H1 (cell line): ENCODE measurements at regions of chr1 and their contacts with region 1.

Region 1: DNA sequence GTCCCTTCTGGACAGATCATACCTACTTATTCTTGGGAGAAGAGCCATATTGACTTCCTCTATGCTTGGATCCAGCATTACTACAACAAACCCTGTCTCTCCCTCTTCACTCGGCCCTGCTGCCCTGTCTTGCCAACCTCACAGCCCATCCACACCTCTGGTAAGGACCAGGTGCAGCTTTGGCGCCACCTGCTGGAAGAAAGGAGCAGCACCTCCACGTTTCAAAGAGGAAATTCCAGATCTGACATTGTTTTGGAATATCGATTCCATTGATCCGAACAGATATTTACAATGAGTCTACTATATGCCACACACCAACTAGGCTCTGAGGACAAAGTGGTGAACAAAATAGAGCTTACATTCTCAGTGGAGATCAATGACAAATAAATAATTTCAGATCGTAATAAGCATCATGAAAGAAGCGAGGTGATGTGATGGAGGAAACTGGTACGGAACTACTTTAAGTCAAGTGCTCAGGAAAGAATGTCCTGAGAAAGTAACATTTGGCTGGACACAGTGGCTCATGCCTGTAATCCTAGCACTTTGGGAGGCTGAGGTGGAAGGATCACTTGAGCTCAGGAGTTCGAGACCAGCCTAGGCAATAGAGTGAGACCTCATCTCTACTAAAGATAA is 18.7 kb downstream of the MFSD2A start:
- DNase-seq: peak; percentile 38 to 85
- H3K4me3 ChIP-seq: no peak overlapping the region
- H3K27ac ChIP-seq: no peak overlapping the region
- H3K4me1 ChIP-seq: peaks cover 0 to 3% (median 0%) of the 10 kb centered on the region in 4 experiments; a peak in 2 of 7 replicates
- H3K27me3 ChIP-seq: no peaks in the 10 kb centered on the region
- CTCF ChIP-seq: peak; percentile 89 to 98 (median 96)
- EP300 ChIP-seq: no peak
- POLR2A ChIP-seq: no peak
- RAD21 ChIP-seq: peak; percentile 98 to 99

Region 2: DNA sequence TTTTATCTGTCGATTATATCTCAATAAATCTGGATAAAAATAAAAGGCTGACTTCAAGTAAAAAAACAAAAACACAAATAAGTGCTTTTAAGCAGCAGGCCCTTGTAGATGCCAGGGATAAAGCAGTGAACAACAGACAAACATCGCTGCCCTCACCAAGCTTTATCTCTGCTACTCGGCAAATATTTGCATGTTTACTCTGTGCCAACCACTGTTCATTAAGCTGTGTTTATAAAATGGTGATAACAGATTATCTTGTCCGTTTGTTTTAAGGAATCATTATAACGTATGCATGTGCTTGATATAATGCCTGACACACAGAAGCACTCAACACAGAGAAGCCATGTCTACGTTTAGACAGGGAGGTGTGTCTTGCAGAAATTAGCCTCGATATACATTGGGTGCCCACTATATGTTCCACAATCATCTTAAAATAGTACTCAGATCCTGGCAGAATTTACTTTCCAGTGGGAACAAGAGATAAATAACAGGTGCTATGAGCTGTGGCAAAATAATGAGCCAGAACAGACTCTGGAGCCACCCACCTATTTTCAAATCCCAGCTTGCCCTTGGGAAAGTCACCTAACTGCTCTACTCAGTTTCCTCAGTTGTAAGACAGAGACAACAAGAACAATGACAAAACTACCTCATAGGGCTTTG is 137.6 kb before region 1 on chr1:
- CTCF ChIA-PET with region 1: interaction called, 18 read pairs
- POLR2A ChIA-PET with region 1: interaction called, 4 read pairs
- DNase-seq: no peak
- H3K4me3 ChIP-seq: no peak overlapping the region
- H3K27ac ChIP-seq: no peak overlapping the region
- H3K4me1 ChIP-seq: no peaks in the 10 kb centered on the region
- H3K27me3 ChIP-seq: no peaks in the 10 kb centered on the region
- CTCF ChIP-seq: no peak
- EP300 ChIP-seq: no peak
- POLR2A ChIP-seq: no peak
- RAD21 ChIP-seq: no peak

Region 3: DNA sequence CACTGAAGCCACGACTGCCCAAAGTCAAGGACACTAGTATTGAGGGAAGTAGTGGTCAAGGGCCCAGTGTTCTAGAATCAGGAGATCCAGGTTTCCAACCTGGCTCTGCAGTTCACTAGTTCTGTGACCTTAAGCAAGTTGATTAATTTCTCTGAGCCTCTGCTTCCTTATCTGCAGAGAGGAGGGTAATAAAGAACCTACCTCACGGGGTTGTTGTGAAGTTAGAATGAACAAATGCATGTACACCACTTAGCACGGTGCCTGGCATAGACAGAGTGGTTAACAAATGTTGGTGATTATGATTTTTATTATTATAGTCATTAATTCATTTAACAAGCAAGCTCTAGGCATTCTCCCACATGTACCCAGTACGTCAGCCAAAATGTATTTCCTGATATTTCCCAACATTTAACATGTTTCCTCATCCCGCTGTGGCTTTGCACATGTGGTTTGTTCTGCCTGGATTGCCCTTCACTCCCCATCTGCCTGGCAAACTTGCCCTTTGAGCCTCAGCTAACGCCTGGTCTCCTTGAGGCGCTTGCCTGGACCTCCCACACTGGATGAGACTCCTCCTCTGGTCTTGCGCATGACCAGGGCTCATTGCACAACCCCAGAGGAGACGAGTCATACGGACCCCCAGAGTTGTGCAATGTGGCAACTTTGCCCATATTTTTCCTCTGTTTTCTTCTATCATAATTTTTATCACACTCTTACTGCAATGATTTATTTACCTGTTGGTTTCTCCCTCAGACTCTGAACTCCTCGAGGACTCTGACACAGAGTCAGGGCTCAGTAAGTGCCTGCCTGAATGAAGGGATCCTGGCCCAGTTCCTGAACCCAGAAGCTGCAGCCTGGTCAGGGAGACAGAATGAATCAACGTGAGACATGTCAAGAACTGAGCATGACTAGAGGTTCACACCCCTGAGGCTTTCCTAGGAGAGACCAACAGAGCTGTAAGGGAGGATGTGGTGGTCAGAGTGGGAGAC is 39.4 kb before region 1 on chr1:
- CTCF ChIA-PET with region 1: interaction called, 11 read pairs
- POLR2A ChIA-PET with region 1: interaction called, 5 read pairs
- DNase-seq: no peak
- H3K4me3 ChIP-seq: no peak overlapping the region
- H3K27ac ChIP-seq: no peak overlapping the region
- H3K4me1 ChIP-seq: no peaks in the 10 kb centered on the region
- H3K27me3 ChIP-seq: no peaks in the 10 kb centered on the region
- CTCF ChIP-seq: no peak
- EP300 ChIP-seq: no peak
- POLR2A ChIP-seq: no peak
- RAD21 ChIP-seq: no peak

Region 4: GRCh38 chr1:39960431-39960958 is 13.1 kb before region 1 on chr1:
- CTCF ChIA-PET with region 1: interaction called, 64 read pairs
- POLR2A ChIA-PET with region 1: interaction called, 11 read pairs
- DNase-seq: no peak
- H3K4me3 ChIP-seq: no peak overlapping the region
- H3K27ac ChIP-seq: no peak overlapping the region
- H3K4me1 ChIP-seq: peaks cover 0 to 6% (median 5%) of the 10 kb centered on the region in 4 experiments; a peak in 6 of 7 replicates
- H3K27me3 ChIP-seq: no peaks in the 10 kb centered on the region; a peak in 1 of 7 replicates
- CTCF ChIP-seq: no peak
- EP300 ChIP-seq: no peak
- POLR2A ChIP-seq: no peak
- RAD21 ChIP-seq: no peak

Region 5: GRCh38 chr1:40040511-40041465 is 67.2 kb after region 1 on chr1 and contains the start of gene CAP1:
- CTCF ChIA-PET with region 1: interaction called, 5 read pairs
- POLR2A ChIA-PET with region 1: interaction called, 11 read pairs
- DNase-seq: peak; percentile 97 to 99
- H3K4me3 ChIP-seq: peak within 1 kb of the TSS; percentile 79 to 99 (median 93)
- H3K27ac ChIP-seq: peak within 1 kb of the TSS; percentile 96
- H3K4me1 ChIP-seq: peaks cover 3 to 7% (median 3%) of the 10 kb centered on the region in 4 experiments; a peak in 4 of 7 replicates
- H3K27me3 ChIP-seq: no peaks in the 10 kb centered on the region
- CTCF ChIP-seq: no peak
- EP300 ChIP-seq: no peak
- POLR2A ChIP-seq: peak in 1 of 2 experiments; percentile 4; a peak in 1 of 3 replicates
- RAD21 ChIP-seq: no peak
- total RNA-seq, gene CAP1: 274 and 295 TPM in 2 replicates

Region 6: DNA sequence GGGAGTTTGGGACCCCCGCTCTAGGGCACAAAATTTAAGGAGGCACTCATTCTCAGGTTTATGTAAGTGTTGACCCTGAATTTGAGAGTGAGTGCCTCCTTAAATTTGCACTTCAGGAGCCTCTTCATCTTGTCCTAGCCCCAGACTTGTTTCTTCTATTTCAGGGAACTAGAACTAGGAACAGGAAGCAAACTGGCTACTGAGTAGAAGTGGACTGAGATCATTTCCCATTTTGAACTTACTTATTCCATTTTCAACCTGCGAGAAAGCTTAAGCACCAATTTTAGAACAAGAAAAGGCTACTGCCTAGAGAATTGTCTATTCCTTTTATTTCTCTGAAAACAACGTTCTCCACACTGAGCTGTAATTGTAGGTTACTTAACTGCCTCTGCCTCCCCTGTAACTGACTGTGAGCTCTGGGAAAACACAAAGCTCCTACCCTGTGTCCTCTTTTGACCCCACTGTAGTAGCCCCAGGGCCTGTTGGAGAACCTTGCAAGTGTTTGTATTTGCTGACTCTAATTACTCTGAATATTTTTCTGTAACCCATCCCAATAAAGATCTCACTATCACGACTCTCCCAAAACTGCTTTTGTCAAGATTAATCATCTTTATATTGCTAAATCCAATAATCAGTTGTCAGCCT is 121.0 kb after region 1 on chr1:
- CTCF ChIA-PET with region 1: no interaction called
- POLR2A ChIA-PET with region 1: no interaction called
- DNase-seq: no peak
- H3K4me3 ChIP-seq: no peak overlapping the region
- H3K27ac ChIP-seq: no peak overlapping the region
- H3K4me1 ChIP-seq: peaks cover 0 to 2% (median 0%) of the 10 kb centered on the region in 4 experiments; a peak in 2 of 7 replicates
- H3K27me3 ChIP-seq: no peaks in the 10 kb centered on the region
- CTCF ChIP-seq: no peak
- EP300 ChIP-seq: no peak
- POLR2A ChIP-seq: no peak
- RAD21 ChIP-seq: no peak

Region 7: DNA sequence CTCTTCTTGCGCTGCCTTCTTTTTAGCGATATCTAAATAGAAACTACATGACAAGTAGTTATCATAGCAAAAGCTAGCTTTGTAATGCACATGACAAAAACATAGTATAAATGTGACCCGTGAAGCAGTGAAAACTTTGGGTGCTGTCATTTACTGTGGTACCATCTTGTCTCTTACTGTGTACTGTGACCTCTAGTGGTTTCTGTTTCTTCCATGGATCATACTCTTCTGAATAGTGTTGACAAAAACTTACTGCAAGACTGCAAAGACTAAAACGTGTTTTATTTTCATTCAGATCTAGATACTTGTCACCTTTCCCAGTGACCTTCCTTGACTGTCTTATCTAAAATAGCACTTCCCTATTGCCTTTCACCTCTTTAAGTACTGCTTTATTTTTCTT is 193.7 kb after region 1 on chr1:
- CTCF ChIA-PET with region 1: no interaction called
- POLR2A ChIA-PET with region 1: no interaction called
- DNase-seq: no peak
- H3K4me3 ChIP-seq: no peak overlapping the region
- H3K27ac ChIP-seq: no peak overlapping the region
- H3K4me1 ChIP-seq: peaks cover 0 to 4% (median 2%) of the 10 kb centered on the region in 4 experiments; a peak in 4 of 7 replicates
- H3K27me3 ChIP-seq: no peaks in the 10 kb centered on the region
- CTCF ChIP-seq: no peak
- EP300 ChIP-seq: no peak
- POLR2A ChIP-seq: no peak
- RAD21 ChIP-seq: no peak

Region 8: DNA sequence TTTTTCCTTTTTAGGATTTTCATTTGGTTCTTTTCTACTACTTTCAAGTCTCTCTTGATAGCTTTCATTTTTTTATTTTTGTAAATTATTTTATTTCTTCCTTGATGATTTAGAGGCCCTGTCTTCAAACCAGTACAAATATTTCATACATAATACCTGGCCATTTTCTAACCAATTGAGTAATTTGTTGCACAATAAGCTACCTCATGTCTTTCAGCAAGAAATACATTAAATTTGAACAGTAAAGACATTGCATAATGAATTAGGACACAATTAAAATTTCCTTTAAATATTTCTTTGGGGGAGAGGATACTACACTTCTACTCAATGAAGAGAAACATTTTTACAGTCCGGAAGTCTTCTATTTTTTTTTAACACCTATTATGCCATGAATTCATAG is 359.1 kb after region 1 on chr1:
- CTCF ChIA-PET with region 1: no interaction called
- POLR2A ChIA-PET with region 1: no interaction called
- DNase-seq: no peak
- H3K4me3 ChIP-seq: no peak overlapping the region
- H3K27ac ChIP-seq: no peak overlapping the region
- H3K4me1 ChIP-seq: no peaks in the 10 kb centered on the region
- H3K27me3 ChIP-seq: no peaks in the 10 kb centered on the region
- CTCF ChIP-seq: no peak
- EP300 ChIP-seq: no peak
- POLR2A ChIP-seq: no peak
- RAD21 ChIP-seq: no peak